ENCODE measurements at regions of chr6 and their contacts with region 1.

Region 1: DNA sequence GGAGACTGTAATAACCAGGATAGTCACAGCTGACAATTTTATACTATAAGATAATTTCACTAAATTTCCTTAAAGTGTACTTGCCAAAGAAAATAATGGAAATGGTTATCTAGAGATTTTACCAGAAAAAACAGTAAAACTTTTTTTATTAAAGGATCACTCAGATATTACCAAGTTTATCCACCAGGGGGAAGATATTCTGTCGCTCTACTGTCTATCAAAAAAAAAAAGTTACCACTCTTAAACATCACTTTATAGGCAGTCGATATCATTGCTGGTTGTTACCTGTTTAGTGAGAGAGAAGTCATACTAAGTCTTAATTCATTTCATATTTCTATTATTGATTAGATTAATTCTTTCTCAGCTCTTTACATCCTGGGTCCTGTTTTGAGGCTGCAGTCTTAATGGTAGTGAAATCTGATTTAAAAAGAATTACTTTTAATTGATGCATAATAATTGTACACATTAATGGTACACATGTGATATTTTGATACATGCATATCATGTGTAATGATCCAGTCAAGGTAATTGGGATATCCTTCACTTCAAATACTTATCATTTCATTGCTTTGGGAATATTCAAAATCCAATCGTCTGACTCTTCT is 18.9 kb downstream of the L3MBTL3 start:
- DNase-seq: no peak
- ATAC-seq: no peak
- H3K4me3 ChIP-seq: no peak overlapping the region
- H3K27ac ChIP-seq: no peak overlapping the region
- H3K4me1 ChIP-seq: peaks cover 18% of the 10 kb centered on the region
- H3K27me3 ChIP-seq: no peaks in the 10 kb centered on the region
- CTCF ChIP-seq: peak; percentile 47
- POLR2A ChIP-seq: no peak
- RAD21 ChIP-seq: peak; percentile 24

Region 2: DNA sequence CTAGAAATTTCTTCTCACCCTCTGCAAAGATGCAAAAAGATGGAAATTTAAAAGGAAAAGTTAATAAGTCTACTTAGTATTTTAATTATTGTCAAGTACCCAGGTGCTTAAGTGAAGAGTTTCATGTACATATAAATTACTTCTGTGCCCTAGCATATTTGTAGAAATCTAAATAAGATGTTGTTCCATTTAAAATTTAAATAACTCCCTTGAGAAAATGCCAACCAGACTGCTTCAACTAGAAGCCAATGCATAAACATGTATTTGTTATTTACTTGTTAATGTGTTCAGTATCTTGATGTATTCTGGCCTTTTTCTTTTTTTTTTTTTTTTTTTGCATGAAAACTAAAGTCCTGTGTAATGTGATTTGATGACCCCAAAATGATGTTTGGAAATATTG is 169.9 kb before region 1 on chr6:
- CTCF ChIA-PET with region 1: interaction called, 10 read pairs
- POLR2A ChIA-PET with region 1: no interaction called
- dilution Hi-C with region 1: no loop called
- in situ Hi-C with region 1: no loop called
- intact Hi-C with region 1: no loop called
- DNase-seq: no peak
- ATAC-seq: no peak
- H3K4me3 ChIP-seq: no peak overlapping the region
- H3K27ac ChIP-seq: no peak overlapping the region
- H3K4me1 ChIP-seq: peaks cover 2% of the 10 kb centered on the region; the same call in 1 of the 2 replicates
- H3K27me3 ChIP-seq: no peaks in the 10 kb centered on the region
- CTCF ChIP-seq: no peak
- POLR2A ChIP-seq: no peak
- RAD21 ChIP-seq: no peak

Region 3: DNA sequence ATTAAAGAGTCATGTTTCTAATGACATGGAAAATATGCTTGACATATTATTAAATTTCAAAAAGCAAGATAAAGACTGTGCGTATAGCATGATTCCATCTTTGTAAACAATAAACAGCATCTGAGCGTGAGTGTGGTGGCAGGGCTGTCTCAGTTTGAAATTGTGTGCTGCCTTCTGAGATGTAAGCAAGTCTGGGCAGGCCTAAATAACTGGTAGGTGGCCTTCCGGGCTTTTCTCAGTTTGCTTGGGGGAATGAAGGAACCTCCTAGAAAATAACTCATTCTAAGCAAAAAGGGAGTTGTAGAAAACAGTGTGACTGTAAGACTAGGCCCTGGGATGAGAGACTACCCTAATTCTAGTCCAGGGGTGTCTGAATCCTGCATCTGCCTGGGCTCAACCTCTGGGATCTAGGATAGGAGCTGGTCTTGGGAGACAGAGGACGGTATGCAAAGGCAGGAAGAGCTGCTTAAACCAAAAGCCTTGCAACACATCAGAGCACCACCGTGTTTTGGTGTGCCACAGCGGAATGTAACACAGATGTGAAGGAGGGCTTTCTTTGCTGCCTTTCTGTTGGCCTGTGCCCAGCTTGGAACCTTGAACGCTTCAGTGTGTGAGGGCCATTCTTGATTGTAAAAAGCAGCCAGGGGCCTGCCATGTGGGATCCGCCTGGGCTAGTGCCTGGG is 82.4 kb before region 1 on chr6:
- CTCF ChIA-PET with region 1: no interaction called
- POLR2A ChIA-PET with region 1: no interaction called
- dilution Hi-C with region 1: no loop called
- in situ Hi-C with region 1: no loop called
- intact Hi-C with region 1: no loop called
- DNase-seq: no peak
- ATAC-seq: no peak; the same call in none of the 2 replicates
- H3K4me3 ChIP-seq: no peak overlapping the region
- H3K27ac ChIP-seq: no peak overlapping the region
- H3K4me1 ChIP-seq: no peaks in the 10 kb centered on the region
- H3K27me3 ChIP-seq: no peaks in the 10 kb centered on the region
- CTCF ChIP-seq: no peak
- POLR2A ChIP-seq: no peak
- RAD21 ChIP-seq: no peak

Region 4: DNA sequence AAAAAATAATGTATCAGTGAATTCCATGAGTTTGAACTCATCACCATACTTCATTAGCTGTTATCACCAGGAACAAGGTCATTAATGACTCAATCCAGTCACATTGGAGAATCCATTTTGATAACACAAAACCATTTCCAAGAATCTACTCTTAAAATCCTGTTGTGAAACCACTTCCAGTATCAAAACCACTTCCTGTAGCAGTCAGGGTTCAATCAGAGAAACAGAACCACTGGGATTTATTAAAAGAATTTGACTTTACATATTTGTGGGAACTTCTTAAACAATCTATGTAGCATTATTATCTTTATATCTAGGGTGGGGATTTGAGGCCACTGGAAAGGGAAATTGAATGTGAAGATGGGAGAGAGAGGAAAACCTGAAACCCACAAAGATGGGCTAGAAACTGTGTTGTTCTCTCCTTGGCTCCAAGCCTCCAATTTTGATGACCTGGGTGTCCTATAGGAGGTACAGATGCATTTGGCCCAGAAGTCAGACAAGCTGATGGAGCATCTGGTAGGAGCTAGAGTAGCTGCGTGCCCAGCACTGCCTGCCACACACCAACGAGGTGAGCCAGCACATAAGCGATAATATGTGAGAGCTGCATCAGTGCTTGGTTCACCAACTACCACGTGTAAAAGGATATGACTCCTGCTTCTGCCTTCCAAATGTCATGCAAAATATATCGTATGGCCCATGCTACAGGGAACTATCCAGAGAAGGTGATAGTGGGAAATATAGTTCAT is 445.5 kb after region 1 on chr6:
- CTCF ChIA-PET with region 1: no interaction called
- POLR2A ChIA-PET with region 1: no interaction called
- dilution Hi-C with region 1: no loop called
- in situ Hi-C with region 1: no loop called
- intact Hi-C with region 1: no loop called
- DNase-seq: peak; percentile 82
- ATAC-seq: peak; percentile 67
- H3K4me3 ChIP-seq: no peak overlapping the region
- H3K27ac ChIP-seq: peak overlapping the region; percentile 41; the same call in 1 of the 2 replicates
- H3K4me1 ChIP-seq: peaks cover 2% of the 10 kb centered on the region; the same call in 1 of the 2 replicates
- H3K27me3 ChIP-seq: no peaks in the 10 kb centered on the region
- CTCF ChIP-seq: no peak
- POLR2A ChIP-seq: no peak
- RAD21 ChIP-seq: no peak

Region 5: DNA sequence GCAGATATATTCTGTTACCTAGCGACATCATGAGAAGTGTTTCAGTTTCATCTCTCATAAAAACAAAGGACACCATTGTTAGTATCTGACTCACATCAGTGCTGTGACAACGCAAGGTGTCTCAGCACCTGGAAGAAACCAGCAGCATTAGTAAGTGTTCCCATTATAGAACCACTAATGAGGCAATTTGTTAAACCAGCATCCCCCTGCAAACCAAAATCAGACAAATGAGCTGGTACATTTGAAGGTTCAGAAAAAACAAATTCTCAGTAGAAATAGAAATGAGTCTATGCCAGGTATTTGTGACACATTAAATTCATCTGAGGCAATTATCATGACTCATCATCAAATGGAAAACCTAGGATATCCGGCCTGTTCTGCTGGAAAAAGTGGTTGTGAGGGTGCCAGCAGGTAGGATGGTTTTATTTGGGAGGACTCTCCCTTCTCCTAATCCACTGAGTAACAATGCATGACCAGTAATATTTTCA is 480.2 kb after region 1 on chr6:
- CTCF ChIA-PET with region 1: no interaction called
- POLR2A ChIA-PET with region 1: no interaction called
- dilution Hi-C with region 1: no loop called
- in situ Hi-C with region 1: no loop called
- intact Hi-C with region 1: no loop called
- DNase-seq: peak; percentile 20
- ATAC-seq: no peak
- H3K4me3 ChIP-seq: no peak overlapping the region
- H3K27ac ChIP-seq: no peak overlapping the region
- H3K4me1 ChIP-seq: peaks cover 4% of the 10 kb centered on the region; the same call in 1 of the 2 replicates
- H3K27me3 ChIP-seq: no peaks in the 10 kb centered on the region
- CTCF ChIP-seq: no peak
- POLR2A ChIP-seq: no peak
- RAD21 ChIP-seq: no peak

Measured in IMR-90 (cell line).